ENCODE measurements at regions of chr1 and their contacts with region 1.

Region 1: DNA sequence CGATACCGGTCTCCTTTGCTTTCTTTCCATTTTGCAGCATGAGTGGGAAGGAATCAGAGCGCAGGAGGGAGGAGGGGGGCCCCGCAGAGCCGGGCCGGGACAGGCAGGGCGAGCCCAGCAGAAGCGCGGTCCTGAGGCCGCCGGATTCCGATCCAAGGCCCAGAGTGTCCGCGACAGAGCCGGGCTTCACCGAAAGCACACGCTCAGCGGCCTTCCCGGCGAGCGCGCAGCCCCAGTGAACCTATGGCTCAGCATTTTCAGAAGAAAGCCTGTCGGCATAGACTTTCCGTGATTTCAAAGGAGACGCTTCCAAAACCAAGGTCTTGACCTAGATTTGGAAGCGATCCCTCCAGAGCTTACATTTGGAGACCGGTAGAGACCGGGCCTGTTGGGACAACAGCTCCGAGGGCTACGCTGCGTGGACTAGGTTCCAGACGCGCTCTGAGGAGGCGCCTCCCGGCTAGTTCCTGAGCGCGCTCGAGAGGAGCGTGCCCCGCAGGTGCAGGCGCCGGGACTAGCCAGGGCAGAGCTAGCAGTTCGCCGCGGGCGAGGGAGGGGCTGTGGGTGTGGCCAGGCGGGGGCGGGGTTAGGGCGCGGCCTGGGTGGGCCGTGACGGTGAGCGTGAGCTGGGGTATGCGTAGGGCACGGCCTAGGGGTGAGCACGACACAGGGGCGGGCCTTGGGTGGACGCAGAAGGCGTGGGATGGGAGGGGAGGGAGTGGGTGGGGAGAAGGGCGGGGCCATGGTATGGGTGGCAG is 27.8 kb upstream of the PRSS38 start:
- DNase-seq: peak; percentile 96
- ATAC-seq: peak; percentile 93
- H3K4me3 Mint-ChIP-seq: peak overlapping the region; percentile 69
- H3K27ac Mint-ChIP-seq: peak overlapping the region; percentile 22
- H3K4me1 Mint-ChIP-seq: peaks cover 14% of the 10 kb centered on the region
- H3K27me3 Mint-ChIP-seq: no peaks in the 10 kb centered on the region

Region 2: DNA sequence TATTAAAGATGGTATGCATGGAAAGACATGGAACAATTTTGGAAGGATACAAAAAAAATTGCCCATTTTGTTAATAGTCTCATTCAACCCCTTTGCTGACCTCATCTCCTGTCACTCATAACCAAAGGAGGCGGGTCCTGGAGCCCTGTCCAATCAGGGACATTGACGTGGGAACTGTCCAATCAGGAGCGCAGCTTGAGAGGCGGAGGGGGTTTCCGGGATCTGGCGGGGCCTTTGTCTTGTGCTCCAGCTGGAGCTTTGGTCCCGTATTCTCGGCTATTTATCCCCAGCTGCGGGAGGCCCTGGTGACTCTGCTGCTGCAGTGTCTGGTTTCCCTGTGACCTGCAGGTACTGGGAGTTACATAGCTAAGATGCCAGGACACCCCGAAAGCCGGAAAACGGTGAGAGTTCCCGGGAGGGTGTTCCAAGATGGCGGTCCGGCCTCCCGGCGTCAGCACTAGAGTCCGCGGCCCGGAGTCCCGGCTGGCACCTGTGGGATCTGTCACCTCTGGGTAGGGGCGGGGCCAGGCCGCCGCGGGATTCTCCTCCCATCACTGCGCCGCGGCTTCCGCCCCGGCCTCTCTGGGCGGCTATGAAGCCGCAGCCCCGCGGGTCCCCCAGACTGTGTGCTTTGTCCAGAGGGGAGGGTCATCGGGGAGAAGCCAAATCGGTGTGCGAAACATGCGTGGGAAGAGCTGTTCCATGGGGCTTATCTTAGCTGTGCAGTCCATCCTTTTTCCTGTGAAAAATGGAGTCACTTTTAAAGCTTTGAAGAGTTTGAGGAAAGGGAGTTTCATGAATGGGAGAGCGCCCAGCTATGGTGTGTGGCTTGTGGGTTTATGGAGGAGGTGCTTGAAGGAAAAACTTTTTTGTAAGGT is 224.1 kb before region 1 on chr1 and contains the start of gene ZNF678:
- CTCF ChIA-PET with region 1: no interaction called
- POLR2A ChIA-PET with region 1: no interaction called
- intact Hi-C with region 1: loop called in 1 of 2 experiments (anchors 1 kb)
- DNase-seq: peak; percentile 95
- ATAC-seq: peak; percentile 96
- H3K4me3 Mint-ChIP-seq: peak within 1 kb of the TSS; percentile 90
- H3K27ac Mint-ChIP-seq: peak within 1 kb of the TSS; percentile 93
- H3K4me1 Mint-ChIP-seq: peaks cover 34% of the 10 kb centered on the region
- H3K27me3 Mint-ChIP-seq: peaks cover 25% of the 10 kb centered on the region
- total RNA-seq, gene ZNF678: 7.0 to 7.7 TPM

Region 3: DNA sequence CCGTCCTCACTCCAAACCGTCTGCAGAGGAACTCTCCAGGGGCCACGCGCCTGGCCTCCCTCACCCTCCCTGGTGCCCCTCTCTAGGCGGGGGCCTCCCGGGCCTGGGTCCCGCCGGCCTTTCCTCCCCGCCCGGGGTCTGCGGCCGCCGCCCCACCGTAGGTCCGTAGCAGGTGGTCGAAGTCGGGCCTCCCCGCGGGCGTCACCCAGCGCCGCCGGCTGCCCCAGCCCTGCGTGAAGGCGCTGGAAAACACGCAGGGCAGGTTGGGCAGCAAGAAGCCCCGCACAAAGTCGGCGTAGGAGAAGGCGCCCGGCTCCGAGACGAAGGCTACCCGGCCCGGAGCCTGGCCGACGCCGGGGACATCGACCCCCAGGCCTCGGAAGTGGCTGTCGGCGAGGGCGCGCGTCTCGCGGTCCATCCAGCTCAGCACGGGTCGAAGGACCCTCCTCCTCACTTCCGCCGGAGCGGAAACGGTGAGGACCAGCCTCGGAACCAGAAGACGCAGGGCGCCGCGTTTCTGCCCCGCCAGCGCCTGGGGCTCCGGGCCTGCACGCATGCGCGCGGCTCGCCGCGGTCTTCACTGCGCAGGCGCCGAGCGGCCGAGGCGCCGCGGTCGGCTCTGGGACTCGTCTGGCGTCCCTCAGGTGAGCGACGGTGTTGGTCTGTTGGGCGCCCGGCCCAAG is 52.7 kb before region 1 on chr1 and contains the starts of genes JMJD4 and SNAP47:
- CTCF ChIA-PET with region 1: no interaction called
- POLR2A ChIA-PET with region 1: no interaction called
- intact Hi-C with region 1: loop called (anchors 1 to 10 kb)
- DNase-seq: peak; percentile 95
- ATAC-seq: peak; percentile 94
- H3K4me3 Mint-ChIP-seq: peak within 1 kb of the TSS; percentile 89
- H3K27ac Mint-ChIP-seq: peak within 1 kb of the TSS; percentile 86
- H3K4me1 Mint-ChIP-seq: peaks cover 25% of the 10 kb centered on the region
- H3K27me3 Mint-ChIP-seq: no peaks in the 10 kb centered on the region
- total RNA-seq, gene JMJD4: 14.4 to 18.1 TPM
- total RNA-seq, gene SNAP47: 30.3 to 31.2 TPM

Region 4: GRCh38 chr1:227886993-227887696 is 99.5 kb after region 1 on chr1:
- CTCF ChIA-PET with region 1: no interaction called
- POLR2A ChIA-PET with region 1: no interaction called
- intact Hi-C with region 1: loop called in 1 of 2 experiments (anchors 1 kb)
- DNase-seq: peak; percentile 59
- ATAC-seq: peak; percentile 42
- H3K4me3 Mint-ChIP-seq: no peak overlapping the region
- H3K27ac Mint-ChIP-seq: peak overlapping the region; percentile 37
- H3K4me1 Mint-ChIP-seq: peaks cover 32% of the 10 kb centered on the region
- H3K27me3 Mint-ChIP-seq: no peaks in the 10 kb centered on the region

Region 5: DNA sequence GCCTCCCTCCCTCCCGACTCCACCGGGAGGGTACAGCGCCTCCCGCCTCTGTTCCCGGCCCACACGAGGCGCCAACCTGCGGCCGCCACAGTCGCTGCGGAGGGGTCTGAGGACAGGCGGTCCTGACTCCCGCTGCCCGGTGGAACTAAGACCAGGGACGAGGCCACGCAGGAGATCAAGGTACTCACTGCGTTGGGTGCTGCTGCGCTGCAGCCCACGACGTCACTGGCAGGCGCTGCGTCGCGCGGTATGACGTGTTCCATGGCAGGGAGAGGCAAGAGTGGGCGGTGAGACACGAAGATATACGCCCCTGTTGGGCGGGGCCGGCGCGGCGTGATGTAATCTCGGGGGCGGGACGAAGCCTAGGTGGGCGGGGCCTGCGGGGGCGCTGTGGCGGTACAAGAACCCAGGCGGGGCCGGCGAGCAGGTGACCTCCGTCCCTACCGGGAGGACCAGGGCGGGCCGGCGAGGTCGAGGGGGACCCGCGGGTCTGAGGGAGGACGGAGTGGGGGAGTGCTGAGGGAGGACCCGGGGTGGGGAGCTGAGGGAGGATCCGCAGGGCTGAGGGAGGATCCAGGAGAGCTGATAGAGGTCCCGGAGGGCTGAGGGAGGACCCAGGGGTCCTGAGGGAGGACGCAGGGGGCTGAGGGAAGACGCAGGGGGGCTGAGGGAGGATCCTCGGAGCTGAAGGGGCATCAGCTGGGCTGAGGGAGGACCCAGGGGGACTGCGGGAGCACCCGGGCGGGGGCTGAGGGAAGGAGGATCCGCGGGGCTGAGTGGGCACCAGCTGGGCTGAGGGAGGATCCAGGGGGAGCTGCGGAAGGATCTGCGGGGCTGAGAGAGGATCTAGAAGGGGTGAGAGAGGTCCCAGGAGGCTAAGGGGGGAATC is 321.6 kb after region 1 on chr1 and contains the start of gene MRPL55:
- CTCF ChIA-PET with region 1: no interaction called
- POLR2A ChIA-PET with region 1: no interaction called
- intact Hi-C with region 1: loop called in 1 of 2 experiments (anchors 1 kb)
- DNase-seq: peak; percentile 99
- ATAC-seq: peak; percentile 92
- H3K4me3 Mint-ChIP-seq: peak within 1 kb of the TSS; percentile 90
- H3K27ac Mint-ChIP-seq: peak within 1 kb of the TSS; percentile 92
- H3K4me1 Mint-ChIP-seq: peaks cover 21% of the 10 kb centered on the region
- H3K27me3 Mint-ChIP-seq: no peaks in the 10 kb centered on the region
- total RNA-seq, gene MRPL55: 51.0 to 57.7 TPM

Region 6: GRCh38 chr1:228174482-228175375 is 387.0 kb after region 1 on chr1:
- CTCF ChIA-PET with region 1: no interaction called
- POLR2A ChIA-PET with region 1: no interaction called
- intact Hi-C with region 1: loop called (anchors 1 to 5 kb)
- DNase-seq: peak; percentile 59
- ATAC-seq: peak; percentile 67
- H3K4me3 Mint-ChIP-seq: no peak overlapping the region
- H3K27ac Mint-ChIP-seq: no peak overlapping the region
- H3K4me1 Mint-ChIP-seq: no peaks in the 10 kb centered on the region
- H3K27me3 Mint-ChIP-seq: no peaks in the 10 kb centered on the region

Region 7: GRCh38 chr1:228486596-228487335 is 699.1 kb after region 1 on chr1:
- CTCF ChIA-PET with region 1: no interaction called
- POLR2A ChIA-PET with region 1: no interaction called
- intact Hi-C with region 1: loop called in 1 of 2 experiments (anchors 10 kb)
- DNase-seq: peak; percentile 87
- ATAC-seq: peak; percentile 66
- H3K4me3 Mint-ChIP-seq: peak overlapping the region; percentile 96
- H3K27ac Mint-ChIP-seq: peak overlapping the region; percentile 99
- H3K4me1 Mint-ChIP-seq: peaks cover 40% of the 10 kb centered on the region
- H3K27me3 Mint-ChIP-seq: no peaks in the 10 kb centered on the region